ENCODE measurements at regions of chr2 and their contacts with region 1.

Region 1: GRCh38 chr2:165601928-165602521 is 132.5 kb downstream of the CSRNP3 start:
- DNase-seq: no peak
- ATAC-seq: no peak
- H3K4me3 ChIP-seq: no peak overlapping the region
- H3K27ac ChIP-seq: no peak overlapping the region
- H3K4me1 ChIP-seq: no peaks in the 10 kb centered on the region
- H3K27me3 ChIP-seq: no peaks in the 10 kb centered on the region
- CTCF ChIP-seq: no peak
- EP300 ChIP-seq: no peak
- POLR2A ChIP-seq: no peak
- RAD21 ChIP-seq: no peak

Region 2: DNA sequence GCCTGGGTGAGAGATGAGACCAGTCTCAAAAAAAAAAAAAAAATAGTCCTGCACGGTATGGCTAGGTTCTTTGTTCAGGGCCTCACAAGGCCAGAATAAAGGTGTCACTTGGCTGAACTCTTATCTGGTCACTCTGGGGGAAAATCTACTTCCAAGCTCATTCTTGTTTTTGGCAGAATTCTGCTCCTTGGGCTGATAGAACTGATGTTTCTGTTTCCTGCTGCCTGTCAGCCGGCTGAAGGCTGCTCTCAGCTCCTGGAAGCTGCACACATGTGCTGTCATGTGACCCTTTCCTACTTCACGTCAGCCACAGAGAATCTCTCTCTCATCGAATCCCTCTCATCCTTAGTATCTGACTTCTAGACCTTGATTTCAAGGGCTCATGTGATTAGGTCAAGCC is 122.2 kb before region 1 on chr2:
- CTCF ChIA-PET with region 1: no interaction called
- POLR2A ChIA-PET with region 1: no interaction called
- RAD21 ChIA-PET with region 1: no interaction called
- SMC1A ChIA-PET with region 1: no interaction called
- in situ Hi-C with region 1: no loop called
- intact Hi-C with region 1: no loop called
- DNase-seq: no peak
- ATAC-seq: no peak; the same call in 2 of the 3 replicates
- H3K4me3 ChIP-seq: no peak overlapping the region
- H3K27ac ChIP-seq: no peak overlapping the region
- H3K4me1 ChIP-seq: no peaks in the 10 kb centered on the region
- H3K27me3 ChIP-seq: no peaks in the 10 kb centered on the region
- CTCF ChIP-seq: no peak
- EP300 ChIP-seq: no peak
- POLR2A ChIP-seq: no peak
- RAD21 ChIP-seq: no peak

Region 3: DNA sequence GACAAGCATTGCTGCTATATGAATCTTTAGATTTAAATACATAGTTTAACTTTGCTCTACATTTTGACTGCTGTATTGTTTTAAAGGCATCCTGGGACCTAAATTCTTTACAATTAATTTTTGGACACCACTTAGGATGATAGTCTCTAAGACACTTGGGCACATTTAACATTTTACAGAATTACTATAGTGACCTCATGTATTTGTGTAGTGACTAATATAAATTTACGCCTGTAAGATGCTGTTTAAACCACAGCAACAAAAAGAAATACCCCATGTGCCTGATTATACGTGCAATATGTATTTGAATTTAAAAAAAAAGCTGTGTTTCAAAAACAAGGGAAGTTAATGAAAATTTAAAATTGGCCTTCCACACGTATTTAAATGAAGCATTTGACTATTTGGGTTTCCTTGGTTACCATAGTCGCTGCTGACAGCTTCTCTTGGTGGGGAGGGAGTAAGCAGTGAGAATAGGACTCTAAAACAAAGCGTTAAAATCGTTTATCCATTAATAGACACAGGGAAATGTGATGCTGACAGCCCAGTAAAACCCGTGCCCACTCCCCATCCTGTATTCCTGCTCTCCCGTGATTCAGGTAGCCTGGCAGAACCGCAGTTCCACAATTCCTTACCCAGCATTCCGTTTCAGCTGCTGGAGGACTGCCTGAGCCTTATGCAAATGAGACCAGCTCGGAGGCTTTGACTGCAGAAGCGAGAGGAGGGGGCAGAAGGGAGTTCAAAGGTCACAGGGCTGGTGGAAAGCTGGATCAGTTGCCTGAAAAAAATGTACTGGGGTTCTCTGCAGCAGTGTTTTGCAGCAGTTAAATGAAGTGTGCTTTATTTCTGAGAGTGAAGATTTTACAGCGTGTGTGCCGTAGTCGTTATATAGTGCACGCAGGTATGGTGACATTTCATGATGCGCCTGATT is 28.2 kb before region 1 on chr2:
- CTCF ChIA-PET with region 1: interaction called, 5 read pairs
- POLR2A ChIA-PET with region 1: interaction called, 6 read pairs
- RAD21 ChIA-PET with region 1: interaction called, 10 read pairs
- SMC1A ChIA-PET with region 1: interaction called, 12 read pairs
- in situ Hi-C with region 1: no loop called
- intact Hi-C with region 1: no loop called
- DNase-seq: no peak
- ATAC-seq: peak; percentile 66
- H3K4me3 ChIP-seq: no peak overlapping the region
- H3K27ac ChIP-seq: no peak overlapping the region
- H3K4me1 ChIP-seq: no peaks in the 10 kb centered on the region
- H3K27me3 ChIP-seq: no peaks in the 10 kb centered on the region
- CTCF ChIP-seq: no peak
- EP300 ChIP-seq: no peak
- POLR2A ChIP-seq: no peak
- RAD21 ChIP-seq: no peak

Region 4: DNA sequence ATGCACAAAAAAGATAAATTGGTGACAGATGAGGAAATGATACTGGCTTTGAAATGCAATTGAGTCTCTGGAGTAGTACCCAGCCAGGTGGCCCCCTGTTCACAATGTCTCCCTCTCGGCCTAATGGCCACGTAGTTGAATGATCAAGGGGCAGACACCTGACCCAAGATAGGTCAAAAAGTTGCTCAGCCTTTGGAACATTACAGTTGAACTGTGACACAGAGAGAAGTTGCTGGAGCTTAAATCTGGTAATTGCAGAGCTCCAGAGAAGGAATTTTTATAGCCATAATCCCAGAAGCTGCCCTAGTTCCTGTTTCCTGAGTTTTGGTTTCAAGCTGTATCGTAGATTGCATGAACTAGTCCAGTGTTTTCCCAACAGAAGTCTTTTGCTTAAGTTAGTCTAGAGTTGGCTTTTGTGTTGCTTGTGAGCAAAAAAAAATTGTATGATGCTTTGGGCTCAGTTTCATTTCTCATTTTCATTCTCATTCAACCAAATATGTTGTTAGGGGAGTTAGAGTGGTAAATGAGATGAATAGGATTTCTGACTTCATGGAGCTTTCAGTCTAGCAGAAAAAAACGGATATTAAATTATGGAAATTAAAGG is 14.6 kb before region 1 on chr2:
- CTCF ChIA-PET with region 1: interaction called, 7 read pairs
- POLR2A ChIA-PET with region 1: interaction called, 4 read pairs
- RAD21 ChIA-PET with region 1: interaction called, 5 read pairs
- SMC1A ChIA-PET with region 1: interaction called, 12 read pairs
- in situ Hi-C with region 1: no loop called
- intact Hi-C with region 1: no loop called
- DNase-seq: peak; percentile 32
- ATAC-seq: peak; percentile 90
- H3K4me3 ChIP-seq: 0 out of 2 replicates have a peak overlapping the region, but pooled peaks have one; percentile 19
- H3K27ac ChIP-seq: no peak overlapping the region; the same call in 1 of the 2 replicates
- H3K4me1 ChIP-seq: peaks cover 5% of the 10 kb centered on the region; the same call in 1 of the 2 replicates
- H3K27me3 ChIP-seq: no peaks in the 10 kb centered on the region
- CTCF ChIP-seq: no peak
- EP300 ChIP-seq: no peak
- POLR2A ChIP-seq: no peak
- RAD21 ChIP-seq: no peak

Region 5: DNA sequence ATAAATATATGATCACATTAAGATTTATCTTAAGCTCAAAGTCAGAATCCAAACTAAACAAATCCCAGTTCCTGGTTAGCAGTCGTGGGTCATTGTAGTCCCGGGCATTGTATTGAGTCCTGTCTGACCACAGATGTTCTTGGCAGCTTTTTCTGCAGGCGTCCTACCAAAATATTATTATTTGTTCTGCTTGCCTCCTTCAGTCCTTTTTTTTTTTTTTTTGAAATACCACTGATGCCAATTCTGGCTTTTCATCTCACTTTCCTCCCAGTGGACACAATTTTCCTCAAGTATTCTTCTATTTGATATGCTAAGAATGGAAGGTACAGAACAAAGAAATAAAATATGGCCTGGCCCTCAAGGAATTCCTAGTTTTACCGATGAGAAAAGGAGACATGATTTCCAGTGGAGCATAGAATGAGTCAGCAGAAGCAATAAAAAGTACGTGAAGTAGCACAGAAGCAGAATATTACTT is 19.1 kb after region 1 on chr2:
- CTCF ChIA-PET with region 1: interaction called, 9 read pairs
- POLR2A ChIA-PET with region 1: interaction called, 8 read pairs
- RAD21 ChIA-PET with region 1: interaction called, 10 read pairs
- SMC1A ChIA-PET with region 1: interaction called, 24 read pairs
- in situ Hi-C with region 1: no loop called
- intact Hi-C with region 1: no loop called
- DNase-seq: no peak
- ATAC-seq: no peak
- H3K4me3 ChIP-seq: no peak overlapping the region
- H3K27ac ChIP-seq: no peak overlapping the region
- H3K4me1 ChIP-seq: no peaks in the 10 kb centered on the region
- H3K27me3 ChIP-seq: no peaks in the 10 kb centered on the region
- CTCF ChIP-seq: no peak
- EP300 ChIP-seq: no peak
- POLR2A ChIP-seq: no peak
- RAD21 ChIP-seq: no peak

Region 6: DNA sequence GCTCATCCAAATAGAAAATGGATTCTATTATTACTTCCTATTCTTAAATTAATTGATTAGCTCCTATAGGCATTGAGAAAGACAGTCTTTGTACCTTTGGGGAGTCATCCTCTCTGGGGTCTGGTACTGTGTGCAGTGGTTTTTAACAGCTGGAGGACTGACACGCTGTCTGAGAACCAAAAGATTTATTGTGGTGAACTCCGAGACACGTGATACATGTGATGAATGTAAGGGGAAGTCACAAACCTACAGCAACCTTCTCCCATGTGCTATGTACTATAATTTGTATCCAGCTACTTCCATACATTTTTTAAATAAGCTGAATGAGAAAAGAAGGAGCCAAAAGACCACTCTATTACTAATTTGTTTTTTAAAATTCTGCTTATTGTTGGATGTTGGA is 58.3 kb after region 1 on chr2:
- CTCF ChIA-PET with region 1: interaction called, 3 read pairs
- POLR2A ChIA-PET with region 1: no interaction called
- RAD21 ChIA-PET with region 1: interaction called, 4 read pairs
- SMC1A ChIA-PET with region 1: interaction called, 21 read pairs
- in situ Hi-C with region 1: no loop called
- intact Hi-C with region 1: no loop called
- DNase-seq: no peak
- ATAC-seq: peak; percentile 88
- H3K4me3 ChIP-seq: no peak overlapping the region
- H3K27ac ChIP-seq: no peak overlapping the region
- H3K4me1 ChIP-seq: no peaks in the 10 kb centered on the region
- H3K27me3 ChIP-seq: no peaks in the 10 kb centered on the region
- CTCF ChIP-seq: no peak
- EP300 ChIP-seq: no peak
- POLR2A ChIP-seq: no peak
- RAD21 ChIP-seq: no peak

Region 7: DNA sequence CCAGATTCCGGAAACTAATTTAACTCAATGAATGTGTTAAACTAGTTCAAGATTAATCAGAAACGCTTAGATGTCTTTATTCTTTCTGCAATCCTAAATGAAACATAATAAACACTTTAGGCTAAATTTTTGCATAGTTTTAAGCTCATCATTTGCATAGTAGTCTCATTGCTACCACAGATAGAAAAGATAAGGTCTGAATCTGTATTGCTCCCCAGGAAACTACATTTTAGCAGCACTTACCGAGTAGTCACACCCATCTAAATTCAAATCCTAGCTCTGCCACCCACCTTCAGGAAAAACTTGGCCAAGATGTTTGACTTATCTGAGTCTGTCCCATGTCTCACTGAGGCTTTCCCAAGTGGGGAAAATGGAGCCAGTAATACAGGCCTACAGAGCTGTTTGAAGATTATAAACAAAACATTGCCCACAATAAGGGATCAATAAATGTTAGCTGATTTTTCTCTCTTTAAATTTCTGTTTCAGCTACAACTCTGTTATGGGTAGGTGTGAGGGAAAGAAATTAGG is 105.0 kb after region 1 on chr2:
- CTCF ChIA-PET with region 1: no interaction called
- POLR2A ChIA-PET with region 1: no interaction called
- RAD21 ChIA-PET with region 1: no interaction called
- SMC1A ChIA-PET with region 1: no interaction called
- in situ Hi-C with region 1: no loop called
- intact Hi-C with region 1: no loop called
- DNase-seq: no peak
- ATAC-seq: no peak
- H3K4me3 ChIP-seq: no peak overlapping the region
- H3K27ac ChIP-seq: no peak overlapping the region
- H3K4me1 ChIP-seq: no peaks in the 10 kb centered on the region
- H3K27me3 ChIP-seq: no peaks in the 10 kb centered on the region
- CTCF ChIP-seq: no peak
- EP300 ChIP-seq: no peak
- POLR2A ChIP-seq: no peak
- RAD21 ChIP-seq: no peak